Mucosa of descending colon (tissue), 3 donors: ENCODE measurements at regions of chr2 and their contacts with region 1.

Region 1: DNA sequence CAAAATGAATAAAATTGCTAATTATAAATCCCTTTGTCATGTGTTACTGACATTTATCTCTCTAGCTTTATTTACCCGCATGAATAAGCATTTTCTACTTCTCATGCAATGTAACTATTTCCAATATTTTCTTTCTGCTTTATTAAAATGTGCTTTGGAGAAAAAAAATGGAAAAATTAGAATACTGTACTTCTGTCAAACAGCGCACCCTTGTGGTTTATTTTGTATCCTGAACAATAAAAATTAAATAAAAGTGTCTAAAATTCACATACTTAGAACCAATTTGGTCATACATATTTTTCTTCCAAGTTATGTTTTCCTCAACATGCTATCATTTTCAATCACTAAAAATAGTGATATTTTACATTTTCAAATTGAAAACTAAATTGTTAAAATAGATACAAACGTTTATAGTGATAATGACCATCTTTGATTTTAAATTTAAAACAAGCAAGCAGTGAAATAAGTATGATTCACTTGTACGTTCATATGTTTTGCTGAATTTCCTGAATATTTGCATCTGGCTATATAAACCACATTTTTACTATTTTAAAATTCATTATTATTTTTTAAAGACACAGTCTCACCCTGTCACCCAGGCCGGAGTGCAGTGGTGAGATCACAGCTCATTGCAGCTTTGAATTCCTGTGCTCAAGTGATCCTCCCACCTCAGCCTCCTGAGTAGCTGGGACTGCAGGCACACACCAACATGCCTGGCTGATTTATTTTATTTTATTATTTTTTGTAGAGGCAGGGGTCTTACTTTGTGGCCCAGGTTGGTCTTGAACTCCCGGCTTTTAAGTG is 95.9 kb upstream of the GRB14 start:
- DNase-seq: peak in 1 of 3 donors; percentile 19
- ATAC-seq: no peak
- H3K4me3 ChIP-seq: no peak overlapping the region
- H3K4me1 ChIP-seq: no peaks in the 10 kb centered on the region
- CTCF ChIP-seq: no peak

Region 2: DNA sequence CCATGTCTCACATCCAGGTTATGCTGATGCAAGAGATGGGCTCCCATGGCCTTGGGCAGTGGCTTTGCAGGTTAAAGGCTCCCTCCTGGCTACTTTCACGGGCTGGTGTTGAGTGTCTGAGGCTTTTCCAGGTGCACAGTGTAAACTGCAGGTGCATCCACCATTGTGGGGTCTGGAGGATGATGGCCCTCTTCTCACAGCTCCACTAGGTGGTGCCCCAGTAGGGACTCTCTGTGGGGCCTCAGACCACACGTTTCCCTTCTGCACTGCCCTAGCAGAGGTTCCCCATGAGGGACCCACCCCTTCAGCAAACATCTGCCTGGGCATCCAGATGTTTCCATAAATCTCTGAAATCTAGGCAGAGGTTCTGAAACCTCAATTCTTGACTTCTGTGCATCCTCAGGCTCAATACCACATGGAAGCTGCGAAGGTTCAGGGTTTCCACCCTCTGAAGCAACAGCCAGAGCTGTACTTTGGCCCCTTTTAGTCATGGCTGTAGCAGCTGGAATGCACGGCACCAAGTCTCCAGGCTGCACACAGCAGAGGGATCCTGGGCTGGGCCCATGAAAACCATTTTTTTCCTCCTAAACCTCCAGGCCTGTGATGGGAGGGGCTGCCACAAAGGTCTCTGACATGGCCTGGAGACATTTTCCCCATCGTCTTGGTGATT is 888.6 kb before region 1 on chr2:
- intact Hi-C with region 1: no loop called
- DNase-seq: no peak
- ATAC-seq: no peak
- H3K4me3 ChIP-seq: no peak overlapping the region
- H3K4me1 ChIP-seq: no peaks in the 10 kb centered on the region
- CTCF ChIP-seq: no peak

Region 3: GRCh38 chr2:164554487-164554886 is 162.7 kb before region 1 on chr2:
- intact Hi-C with region 1: loop called in 1 of 2 experiments (anchors 10 kb)
- DNase-seq: no peak
- ATAC-seq: no peak
- H3K4me3 ChIP-seq: no peak overlapping the region
- H3K4me1 ChIP-seq: no peaks in the 10 kb centered on the region
- CTCF ChIP-seq: no peak

Region 4: DNA sequence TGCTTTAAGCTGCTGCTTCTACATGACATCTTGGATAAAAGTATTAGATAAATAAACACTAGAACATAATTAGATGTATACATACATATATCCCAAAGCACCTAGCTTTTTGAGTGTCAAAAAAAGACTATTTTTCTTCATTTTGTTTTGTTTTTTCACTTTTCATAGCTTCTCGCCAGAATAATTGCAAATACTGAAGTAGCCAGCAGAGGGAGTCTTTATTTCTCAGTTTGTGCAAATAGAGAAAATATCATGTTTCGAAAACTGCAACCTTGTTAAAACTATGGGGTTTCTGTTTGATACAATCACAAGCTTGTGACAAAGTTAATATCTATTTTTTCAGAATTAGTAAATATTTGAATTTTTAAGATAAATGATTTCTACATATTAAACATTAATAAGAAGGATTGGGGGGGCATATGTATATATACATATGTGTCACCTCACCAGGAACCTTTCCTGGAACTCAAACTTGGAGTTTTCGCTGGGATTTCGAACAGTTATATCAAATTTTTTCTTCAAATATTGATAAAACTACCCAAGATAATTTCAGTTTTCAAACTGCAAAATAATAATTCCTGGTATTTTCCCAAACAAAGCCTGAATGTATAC is 156.9 kb before region 1 on chr2:
- intact Hi-C with region 1: loop called (anchors 10 kb)
- DNase-seq: peak in 1 of 3 donors; percentile 11
- ATAC-seq: no peak
- H3K4me3 ChIP-seq: no peak overlapping the region
- H3K4me1 ChIP-seq: no peaks in the 10 kb centered on the region
- CTCF ChIP-seq: peak; percentile 37

Region 5: DNA sequence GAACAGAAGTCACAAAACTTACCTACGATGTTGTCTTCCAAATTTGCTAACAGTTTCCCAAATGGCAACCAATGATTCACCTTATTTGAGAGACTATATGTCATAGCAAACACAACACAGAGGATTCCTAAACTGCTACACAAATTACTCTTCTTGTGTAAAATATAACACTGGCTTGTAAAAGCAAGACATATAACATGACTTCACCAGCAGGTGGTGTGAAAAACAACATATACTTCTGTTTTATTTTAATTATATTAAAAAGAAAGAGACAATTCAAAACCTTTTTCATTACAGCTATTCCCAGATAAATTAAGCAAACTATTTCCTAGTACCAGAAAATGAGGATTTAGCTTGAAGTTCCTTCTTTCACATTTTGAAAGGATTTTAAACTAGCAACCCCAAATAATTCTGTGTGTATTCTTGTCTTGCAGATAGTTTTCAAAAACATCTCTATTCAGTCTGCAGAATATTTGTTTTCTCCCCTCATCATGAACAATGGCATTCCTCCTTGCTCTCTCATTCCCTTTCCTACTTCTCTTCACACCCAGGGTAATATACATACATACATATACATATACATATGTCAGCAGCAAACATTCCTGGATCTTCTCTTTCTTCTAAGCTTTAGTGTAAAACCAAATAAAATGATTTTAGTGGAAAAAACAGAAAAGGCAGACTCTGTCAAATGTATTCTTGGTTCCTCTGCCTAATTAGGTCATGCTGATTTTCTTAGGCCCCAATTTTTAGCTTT is 424.6 kb after region 1 on chr2:
- intact Hi-C with region 1: no loop called
- DNase-seq: no peak
- ATAC-seq: no peak
- H3K4me3 ChIP-seq: no peak overlapping the region
- H3K4me1 ChIP-seq: no peaks in the 10 kb centered on the region
- CTCF ChIP-seq: no peak